ENCODE measurements at regions of chr4 and their contacts with region 1.

Region 1: DNA sequence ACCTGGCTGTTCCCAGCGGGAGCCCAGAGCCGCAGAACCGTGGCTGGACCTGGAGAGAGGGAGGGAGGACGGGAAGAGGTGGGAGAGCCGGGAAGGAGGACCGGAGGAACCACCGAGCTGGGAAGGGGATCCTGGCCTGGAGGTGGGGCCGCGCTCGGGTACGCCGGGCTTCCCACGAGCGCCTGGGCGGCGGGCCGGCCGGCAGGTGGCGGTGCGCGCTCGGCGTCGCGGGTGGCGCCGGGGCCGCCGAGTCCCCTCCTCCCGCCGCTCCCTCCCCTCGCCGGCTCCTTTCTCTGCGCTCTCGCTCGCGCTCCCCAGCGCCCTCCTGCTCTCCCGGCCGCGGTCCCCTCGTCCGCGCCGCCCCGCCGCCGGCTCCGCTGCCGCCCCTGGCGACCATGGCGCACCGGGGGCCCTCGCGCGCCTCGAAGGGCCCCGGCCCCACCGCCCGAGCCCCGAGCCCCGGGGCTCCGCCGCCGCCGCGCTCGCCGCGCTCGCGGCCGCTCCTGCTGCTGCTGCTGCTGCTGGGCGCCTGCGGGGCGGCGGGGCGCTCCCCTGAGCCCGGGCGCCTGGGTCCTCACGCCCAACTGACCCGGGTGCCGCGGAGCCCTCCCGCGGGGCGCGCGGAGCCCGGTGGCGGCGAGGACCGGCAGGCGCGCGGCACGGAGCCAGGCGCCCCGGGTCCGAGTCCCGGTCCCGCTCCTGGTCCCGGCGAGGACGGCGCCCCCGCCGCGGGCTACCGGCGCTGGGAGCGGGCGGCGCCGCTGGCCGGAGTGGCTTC is at the start of gene SORCS2:
- DNase-seq: no peak
- H3K4me3 ChIP-seq: peak within 1 kb of the TSS; percentile 43
- H3K27ac ChIP-seq: no peak within 1 kb of the TSS
- H3K27me3 ChIP-seq: peaks cover 65% of the 10 kb centered on the region
- CTCF ChIP-seq: peak; percentile 36
- polyA plus RNA-seq, gene SORCS2: 0.29 and 0.65 TPM in 2 replicates

Region 2: DNA sequence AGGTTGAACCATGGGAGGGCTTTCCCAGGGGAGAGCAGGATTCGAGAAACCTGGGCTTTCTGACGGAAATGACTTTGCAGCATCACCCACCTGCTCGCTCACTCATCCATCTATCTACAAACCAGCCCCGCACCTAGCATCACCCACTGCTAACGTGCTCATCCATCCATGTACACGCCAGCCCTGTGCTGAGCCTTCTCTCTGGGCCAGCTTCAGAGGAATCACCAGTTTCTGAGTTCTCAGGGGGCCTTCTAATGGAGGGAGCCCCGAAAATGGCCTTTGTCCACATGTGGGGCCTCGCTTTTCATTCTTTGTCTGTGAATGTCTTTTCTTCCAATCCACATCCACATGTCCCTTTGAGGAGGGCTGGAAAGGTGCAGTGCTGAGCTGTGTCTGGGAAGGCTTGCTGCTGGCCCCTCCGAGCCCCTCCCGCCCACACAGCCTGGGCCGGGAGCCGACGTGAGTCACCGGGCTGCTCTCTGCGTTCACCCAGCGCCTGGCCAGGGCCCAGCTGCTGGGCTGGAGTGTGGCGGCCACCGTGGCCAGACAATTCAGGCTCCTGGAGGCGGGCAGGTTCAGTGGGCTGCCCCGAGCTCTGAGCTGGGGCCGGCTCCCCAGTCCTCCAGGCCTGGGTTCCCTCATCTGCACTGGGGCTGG is 14.6 kb after region 1 on chr4:
- CTCF ChIA-PET with region 1: interaction called, 11 read pairs
- POLR2A ChIA-PET with region 1: interaction called, 5 read pairs
- DNase-seq: peak; percentile 58
- H3K4me3 ChIP-seq: 0 out of 2 replicates have a peak overlapping the region, but pooled peaks have one; percentile 7
- H3K27ac ChIP-seq: peak overlapping the region; percentile 91
- H3K27me3 ChIP-seq: no peaks in the 10 kb centered on the region
- CTCF ChIP-seq: no peak

Region 3: DNA sequence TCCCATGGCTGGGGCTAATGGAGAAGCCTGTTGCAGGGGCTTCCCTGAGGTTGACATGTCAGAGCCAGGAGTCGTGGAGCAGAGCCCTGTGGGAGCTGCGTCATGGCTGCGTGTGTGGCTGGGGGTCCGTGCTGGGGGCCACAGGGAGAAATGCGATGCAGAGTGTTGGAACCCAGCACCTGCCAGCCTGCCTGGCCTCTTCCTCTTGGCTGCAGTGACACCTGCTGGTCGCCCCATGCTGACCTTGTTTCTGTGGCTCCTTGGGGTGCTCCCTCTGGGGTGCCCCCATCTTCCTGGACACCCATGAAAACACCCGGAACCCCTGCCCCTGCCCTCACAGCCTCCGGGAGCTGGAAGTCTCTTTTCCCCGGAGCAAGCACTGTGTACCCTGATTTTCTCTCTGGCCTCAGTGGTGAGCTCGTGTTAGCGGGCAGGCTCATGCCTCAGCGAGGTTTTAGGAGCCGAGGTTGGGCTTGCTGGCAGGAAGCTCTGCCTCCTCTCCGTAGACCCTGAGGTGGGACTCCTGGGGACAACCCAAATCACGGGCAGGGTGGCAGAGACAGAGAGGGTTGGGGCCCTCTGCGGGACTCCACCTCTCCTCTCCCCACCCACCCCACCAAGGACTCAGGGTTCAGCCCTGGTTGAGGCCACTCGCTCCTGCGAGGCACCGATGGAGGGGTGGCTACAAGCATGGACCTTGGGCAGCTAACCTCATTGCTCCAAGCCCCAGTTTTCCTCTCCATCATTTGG is 103.6 kb after region 1 on chr4:
- CTCF ChIA-PET with region 1: interaction called, 31 read pairs
- POLR2A ChIA-PET with region 1: no interaction called
- DNase-seq: no peak
- H3K4me3 ChIP-seq: no peak overlapping the region
- H3K27ac ChIP-seq: no peak overlapping the region
- H3K27me3 ChIP-seq: peaks cover 19% of the 10 kb centered on the region
- CTCF ChIP-seq: peak; percentile 73

Region 4: GRCh38 chr4:7335344-7336069 is 143.1 kb after region 1 on chr4:
- CTCF ChIA-PET with region 1: interaction called, 13 read pairs
- POLR2A ChIA-PET with region 1: interaction called, 3 read pairs
- DNase-seq: no peak
- H3K4me3 ChIP-seq: no peak overlapping the region
- H3K27ac ChIP-seq: no peak overlapping the region
- H3K27me3 ChIP-seq: peaks cover 13% of the 10 kb centered on the region
- CTCF ChIP-seq: peak; percentile 62

Region 5: GRCh38 chr4:7719354-7720174 is 527.1 kb after region 1 on chr4:
- CTCF ChIA-PET with region 1: interaction called, 13 read pairs
- POLR2A ChIA-PET with region 1: no interaction called
- DNase-seq: no peak
- H3K4me3 ChIP-seq: no peak overlapping the region
- H3K27ac ChIP-seq: no peak overlapping the region
- H3K27me3 ChIP-seq: peaks cover 16% of the 10 kb centered on the region
- CTCF ChIP-seq: peak; percentile 84

Measured in AG04450 (cell line).